Natural killer cell (primary cell): ENCODE measurements at regions of chr15 and their contacts with region 1.

Region 1: GRCh38 chr15:35545824-35546510 is at the start of gene DPH6:
- DNase-seq: peak; percentile 84 to 92
- ATAC-seq: peak; percentile 86 to 89 (median 87)
- H3K4me3 ChIP-seq: peak within 1 kb of the TSS; percentile 83
- H3K4me3 Mint-ChIP-seq: peak within 1 kb of the TSS; percentile 96
- H3K27ac ChIP-seq: peak within 1 kb of the TSS; percentile 98
- H3K27ac Mint-ChIP-seq: peak within 1 kb of the TSS; percentile 96 to 97
- H3K4me1 ChIP-seq: peaks cover 13% of the 10 kb centered on the region
- H3K4me1 Mint-ChIP-seq: peaks cover 19 to 26% of the 10 kb centered on the region in 2 donors
- H3K27me3 ChIP-seq: no peaks in the 10 kb centered on the region
- H3K27me3 Mint-ChIP-seq: no peaks in the 10 kb centered on the region
- CTCF ChIP-seq: no peak
- total RNA-seq, gene DPH6: 10.8 to 13.3 (median 13.1) TPM

Region 2: DNA sequence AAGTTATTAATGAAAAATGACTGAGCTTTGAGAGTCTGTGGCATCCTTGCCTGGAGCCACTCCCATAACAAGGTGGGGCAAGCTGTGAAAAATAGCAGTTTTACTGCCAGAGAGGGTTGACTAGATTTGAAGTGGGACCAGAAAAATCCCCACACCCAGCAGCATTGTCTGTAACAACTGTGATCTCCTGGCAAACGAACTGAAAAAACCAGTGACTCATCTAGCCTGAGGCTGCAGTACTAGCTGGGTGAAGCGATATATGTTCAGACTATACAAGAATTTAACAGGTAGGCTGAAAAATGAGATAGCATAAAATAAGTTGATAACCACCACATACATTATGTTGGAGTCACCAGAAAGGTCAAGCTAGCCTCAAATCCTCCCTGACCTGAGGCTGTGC is 64.0 kb before region 1 on chr15:
- intact Hi-C with region 1: loop called (anchors 10 kb)
- DNase-seq: peak; percentile 12 to 29
- ATAC-seq: peak; percentile 87 to 92 (median 92)
- H3K4me3 ChIP-seq: no peak overlapping the region
- H3K4me3 Mint-ChIP-seq: peak overlapping the region; percentile 49
- H3K27ac ChIP-seq: no peak overlapping the region
- H3K27ac Mint-ChIP-seq: peak overlapping the region; percentile 41 to 52
- H3K4me1 ChIP-seq: peaks cover 6% of the 10 kb centered on the region
- H3K4me1 Mint-ChIP-seq: peaks cover 14 to 16% of the 10 kb centered on the region in 2 donors
- H3K27me3 ChIP-seq: no peaks in the 10 kb centered on the region
- H3K27me3 Mint-ChIP-seq: no peaks in the 10 kb centered on the region
- CTCF ChIP-seq: no peak

Region 3: GRCh38 chr15:36579792-36580431 is 1033.9 kb after region 1 on chr15:
- intact Hi-C with region 1: loop called (anchors 5 kb)
- DNase-seq: peak in 1 of 2 donors; percentile 51
- ATAC-seq: peak; percentile 25 to 30 (median 27)
- H3K4me3 ChIP-seq: peak overlapping the region; percentile 66
- H3K4me3 Mint-ChIP-seq: peak overlapping the region; percentile 90
- H3K27ac ChIP-seq: peak overlapping the region; percentile 83
- H3K27ac Mint-ChIP-seq: peak overlapping the region; percentile 90
- H3K4me1 ChIP-seq: peaks cover 6% of the 10 kb centered on the region
- H3K4me1 Mint-ChIP-seq: peaks cover 11% of the 10 kb centered on the region in 2 donors
- H3K27me3 ChIP-seq: no peaks in the 10 kb centered on the region
- H3K27me3 Mint-ChIP-seq: peaks cover 1 to 2% of the 10 kb centered on the region in 2 donors
- CTCF ChIP-seq: no peak